ENCODE measurements at regions of chr12 and their contacts with region 1.

Region 1: DNA sequence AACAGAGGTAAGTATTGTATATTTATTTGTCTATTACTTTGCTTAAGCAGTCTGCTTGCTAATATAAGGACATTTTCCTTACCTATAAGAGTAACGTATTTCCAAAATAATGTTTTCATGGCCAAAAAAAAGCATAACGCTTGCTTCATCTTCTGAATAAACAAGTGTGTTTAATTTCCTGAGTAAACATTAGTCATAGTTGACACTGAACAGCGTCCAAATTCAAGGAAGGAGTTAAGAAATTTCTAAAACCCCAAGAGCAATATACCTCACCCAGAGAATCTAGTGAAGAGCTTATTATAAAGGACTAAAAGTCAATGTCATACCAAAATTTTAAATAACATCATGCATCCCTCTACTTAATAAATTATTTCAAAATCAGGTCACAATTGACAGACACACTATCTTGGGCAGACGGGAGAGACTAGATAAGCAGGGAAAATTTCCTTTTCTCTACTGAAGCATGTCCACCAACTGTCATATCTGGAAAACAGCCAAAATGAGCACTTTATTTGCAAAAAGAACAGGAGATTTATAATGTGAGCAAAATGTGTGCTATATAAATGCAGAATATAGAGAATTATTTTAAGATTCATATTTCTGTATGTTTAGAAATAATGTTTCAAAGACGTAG is 25.1 kb downstream of the ANKS1B start:
- DNase-seq: no peak
- H3K4me3 ChIP-seq: no peak overlapping the region
- H3K27me3 ChIP-seq: no peaks in the 10 kb centered on the region
- CTCF ChIP-seq: no peak

Region 2: GRCh38 chr12:99374023-99374422 is 585.6 kb before region 1 on chr12:
- CTCF ChIA-PET with region 1: no interaction called
- POLR2A ChIA-PET with region 1: interaction called, 10 read pairs
- DNase-seq: no peak
- H3K4me3 ChIP-seq: no peak overlapping the region
- H3K27me3 ChIP-seq: no peaks in the 10 kb centered on the region
- CTCF ChIP-seq: no peak

Region 3: GRCh38 chr12:99977550-99977949 is 17.9 kb after region 1 on chr12:
- CTCF ChIA-PET with region 1: no interaction called
- POLR2A ChIA-PET with region 1: no interaction called
- DNase-seq: no peak
- H3K4me3 ChIP-seq: no peak overlapping the region
- H3K27me3 ChIP-seq: no peaks in the 10 kb centered on the region
- CTCF ChIP-seq: no peak

Region 4: GRCh38 chr12:100185361-100185894 is 225.8 kb after region 1 on chr12:
- CTCF ChIA-PET with region 1: no interaction called
- POLR2A ChIA-PET with region 1: no interaction called
- DNase-seq: no peak
- H3K4me3 ChIP-seq: no peak overlapping the region
- H3K27me3 ChIP-seq: no peaks in the 10 kb centered on the region
- CTCF ChIP-seq: no peak